Endothelial cell of umbilical vein (primary cell): ENCODE measurements at regions of chr21 and their contacts with region 1.

Region 1: GRCh38 chr21:25983745-25984144 is 186.8 kb downstream of the APP start:
- DNase-seq: peak; percentile 84
- H3K4me3 ChIP-seq: no peak overlapping the region
- H3K27ac ChIP-seq: peak overlapping the region; percentile 62
- H3K4me1 ChIP-seq: peaks cover 65% of the 10 kb centered on the region
- H3K27me3 ChIP-seq: no peaks in the 10 kb centered on the region
- CTCF ChIP-seq: no peak
- POLR2A ChIP-seq: peak; percentile 11

Region 2: DNA sequence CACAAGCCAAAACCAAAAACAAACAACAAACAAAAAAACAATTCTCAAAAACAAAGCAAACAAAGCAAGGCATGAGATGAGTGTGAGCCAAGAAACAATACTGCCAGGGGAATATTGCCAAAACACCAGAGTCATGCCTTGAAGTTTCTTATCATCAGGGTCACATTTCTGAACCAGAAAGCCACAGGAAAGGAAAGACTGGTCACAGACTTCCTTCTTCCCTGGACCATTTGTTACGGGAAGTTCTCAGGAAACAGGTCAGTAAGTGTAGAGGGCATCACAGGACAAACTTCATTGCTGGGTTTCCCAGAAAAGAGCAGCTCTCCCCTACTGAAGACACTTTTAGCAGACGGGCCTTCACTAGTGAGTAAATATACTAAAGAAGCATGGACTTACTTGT is 57.8 kb before region 1 on chr21:
- CTCF ChIA-PET with region 1: no interaction called
- POLR2A ChIA-PET with region 1: no interaction called
- dilution Hi-C with region 1: no loop called
- intact Hi-C with region 1: loop called (anchors 5 kb)
- DNase-seq: peak; percentile 97
- H3K4me3 ChIP-seq: no peak overlapping the region
- H3K27ac ChIP-seq: peak overlapping the region; percentile 97
- H3K4me1 ChIP-seq: peaks cover 46% of the 10 kb centered on the region
- H3K27me3 ChIP-seq: no peaks in the 10 kb centered on the region
- CTCF ChIP-seq: no peak
- POLR2A ChIP-seq: peak; percentile 79

Region 3: DNA sequence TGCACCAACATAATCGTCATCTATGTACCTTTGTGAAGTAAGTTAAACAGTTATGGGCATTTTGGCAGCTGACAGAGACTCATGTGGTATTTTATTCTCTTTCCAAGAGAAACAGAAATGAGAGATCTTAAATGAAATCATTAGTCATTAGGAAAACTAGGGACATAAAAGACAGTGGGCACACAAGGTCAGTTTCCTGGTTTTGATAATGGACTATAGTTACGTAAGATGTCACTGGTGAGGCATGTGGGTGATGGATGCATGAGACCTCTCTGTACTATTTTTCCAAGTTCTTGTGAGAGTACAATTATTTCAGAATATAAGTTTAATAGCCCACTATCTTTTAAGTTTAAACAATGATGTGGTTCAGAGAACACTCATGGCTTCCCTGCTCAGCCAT is 30.1 kb before region 1 on chr21:
- CTCF ChIA-PET with region 1: interaction called, 3 read pairs
- POLR2A ChIA-PET with region 1: no interaction called
- dilution Hi-C with region 1: no loop called
- intact Hi-C with region 1: loop called (anchors 1 kb)
- DNase-seq: peak; percentile 87
- H3K4me3 ChIP-seq: no peak overlapping the region
- H3K27ac ChIP-seq: peak overlapping the region; percentile 88
- H3K4me1 ChIP-seq: peaks cover 55% of the 10 kb centered on the region
- H3K27me3 ChIP-seq: no peaks in the 10 kb centered on the region
- CTCF ChIP-seq: no peak
- POLR2A ChIP-seq: peak; percentile 52